ENCODE measurements at regions of chr19 and their contacts with region 1.

Region 1: GRCh38 chr19:50368649-50369570 is 3.5 kb upstream of the NAPSA start:
- DNase-seq: peak; percentile 95 to 99
- ATAC-seq: peak; percentile 95
- H3K4me3 ChIP-seq: peak overlapping the region; percentile 62
- H3K27ac ChIP-seq: peak overlapping the region; percentile 85 to 87
- H3K4me1 ChIP-seq: peaks cover 5% of the 10 kb centered on the region
- CTCF ChIP-seq: peak; percentile 94
- EP300 ChIP-seq: no peak
- POLR2A ChIP-seq: peak; percentile 79
- RAD21 ChIP-seq: peak; percentile 95

Region 2: GRCh38 chr19:50329146-50329925 is 39.6 kb before region 1 on chr19 and contains the start of gene KCNC3:
- CTCF ChIA-PET with region 1: interaction called, 12 read pairs
- POLR2A ChIA-PET with region 1: interaction called, 3 read pairs
- DNase-seq: peak; percentile 99 to 100
- ATAC-seq: peak; percentile 54 to 83
- H3K4me3 ChIP-seq: peak within 1 kb of the TSS; percentile 60
- H3K27ac ChIP-seq: peak within 1 kb of the TSS; percentile 50 to 75; a peak in 5 of 6 replicates
- H3K4me1 ChIP-seq: peaks cover 45% of the 10 kb centered on the region
- CTCF ChIP-seq: no peak
- EP300 ChIP-seq: no peak
- POLR2A ChIP-seq: no peak; the same call in 1 of the 2 replicates
- RAD21 ChIP-seq: no peak
- polyA plus RNA-seq, gene KCNC3: 0.17 and 0.32 TPM in 2 replicates

Region 3: GRCh38 chr19:50383852-50384684 is 15.2 kb after region 1 on chr19 and contains the start of gene POLD1:
- CTCF ChIA-PET with region 1: interaction called, 20 read pairs
- POLR2A ChIA-PET with region 1: interaction called, 10 read pairs
- DNase-seq: peak; percentile 99
- ATAC-seq: peak; percentile 68 to 88
- H3K4me3 ChIP-seq: peak within 1 kb of the TSS; percentile 67
- H3K27ac ChIP-seq: peak within 1 kb of the TSS; percentile 80 to 93
- H3K4me1 ChIP-seq: peaks cover 15% of the 10 kb centered on the region
- CTCF ChIP-seq: no peak
- EP300 ChIP-seq: no peak
- POLR2A ChIP-seq: peak; percentile 82
- RAD21 ChIP-seq: no peak
- polyA plus RNA-seq, gene POLD1: 24.2 and 26.1 TPM in 2 replicates

Region 4: GRCh38 chr19:50414864-50415660 is 46.2 kb after region 1 on chr19:
- CTCF ChIA-PET with region 1: interaction called, 18 read pairs
- POLR2A ChIA-PET with region 1: no interaction called
- DNase-seq: peak; percentile 86 to 89
- ATAC-seq: peak; percentile 67 to 89
- H3K4me3 ChIP-seq: no peak overlapping the region
- H3K27ac ChIP-seq: no peak overlapping the region
- H3K4me1 ChIP-seq: no peaks in the 10 kb centered on the region
- CTCF ChIP-seq: peak; percentile 82
- EP300 ChIP-seq: no peak
- POLR2A ChIP-seq: no peak
- RAD21 ChIP-seq: peak; percentile 52 to 59; a peak in 4 of 5 replicates

Region 5: DNA sequence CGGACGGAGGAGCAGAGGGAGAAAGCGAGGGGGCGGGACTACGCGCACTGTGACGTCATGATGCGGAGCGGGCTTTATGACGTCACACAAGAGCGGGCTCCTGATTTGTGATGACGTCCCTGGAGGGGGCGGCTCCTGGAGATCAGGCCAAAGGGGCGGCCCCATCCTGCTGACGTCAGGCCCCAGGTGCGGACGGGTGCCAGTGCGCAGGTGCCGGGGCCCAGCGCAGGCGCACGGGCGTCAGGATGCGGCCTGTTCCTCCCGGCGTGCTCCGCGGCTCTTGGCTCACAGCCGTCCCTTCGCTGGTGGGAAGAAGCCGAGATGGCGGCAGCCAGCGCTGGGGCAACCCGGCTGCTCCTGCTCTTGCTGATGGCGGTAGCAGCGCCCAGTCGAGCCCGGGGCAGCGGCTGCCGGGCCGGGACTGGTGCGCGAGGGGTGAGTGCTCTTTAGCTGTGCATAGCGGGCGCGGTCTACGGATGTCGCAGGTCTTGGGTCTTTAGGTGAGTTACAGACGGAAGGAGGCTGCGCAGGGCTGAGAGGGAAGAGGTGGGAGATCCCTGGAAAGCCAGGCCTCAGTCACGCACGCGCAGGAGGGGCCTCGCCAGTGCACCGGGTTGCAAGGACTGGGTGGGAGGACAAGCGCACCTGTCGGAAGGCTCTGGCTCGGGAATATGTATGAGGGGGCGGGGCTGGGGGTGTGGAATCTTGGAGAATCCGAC is 107.5 kb after region 1 on chr19 and contains the starts of genes EMC10 and GARIN5A:
- CTCF ChIA-PET with region 1: interaction called, 25 read pairs
- POLR2A ChIA-PET with region 1: interaction called, 3 read pairs
- DNase-seq: peak; percentile 99
- ATAC-seq: peak; percentile 73 to 91
- H3K4me3 ChIP-seq: peak within 1 kb of the TSS; percentile 86
- H3K27ac ChIP-seq: peak within 1 kb of the TSS; percentile 87 to 93
- H3K4me1 ChIP-seq: peaks cover 12% of the 10 kb centered on the region
- CTCF ChIP-seq: no peak
- EP300 ChIP-seq: no peak
- POLR2A ChIP-seq: peak; percentile 96
- RAD21 ChIP-seq: no peak
- polyA plus RNA-seq, gene EMC10: 52.8 and 54.0 TPM in 2 replicates
- polyA plus RNA-seq, gene GARIN5A: 0.57 and 1.1 TPM in 2 replicates